Common myeloid progenitor, CD34-positive (primary cell): ENCODE measurements at regions of chr5 and their contacts with region 1.

Region 1: GRCh38 chr5:172958331-172959046 is 735 bp upstream of the RPL26L1 start:
- DNase-seq: peak; percentile 57 to 69 (median 68)
- H3K4me3 ChIP-seq: peak overlapping the region; percentile 56 to 99 (median 94)
- H3K27ac ChIP-seq: peak overlapping the region in 1 of 2 experiments; percentile 92
- H3K4me1 ChIP-seq: peaks cover 3 to 31% (median 23%) of the 10 kb centered on the region in 4 experiments
- H3K27me3 ChIP-seq: no peaks in the 10 kb centered on the region

Region 2: GRCh38 chr5:172973127-172973916 is 14.8 kb after region 1 on chr5:
- CTCF ChIA-PET with region 1: interaction called, 35 read pairs
- POLR2A ChIA-PET with region 1: no interaction called
- DNase-seq: peak in 1 of 3 donors; percentile 21
- H3K4me3 ChIP-seq: no peak overlapping the region
- H3K27ac ChIP-seq: no peak overlapping the region
- H3K4me1 ChIP-seq: no peaks in the 10 kb centered on the region
- H3K27me3 ChIP-seq: peaks cover 0 to 5% (median 0%) of the 10 kb centered on the region in 5 experiments